ENCODE measurements at regions of chr16 and their contacts with region 1.

Region 1: DNA sequence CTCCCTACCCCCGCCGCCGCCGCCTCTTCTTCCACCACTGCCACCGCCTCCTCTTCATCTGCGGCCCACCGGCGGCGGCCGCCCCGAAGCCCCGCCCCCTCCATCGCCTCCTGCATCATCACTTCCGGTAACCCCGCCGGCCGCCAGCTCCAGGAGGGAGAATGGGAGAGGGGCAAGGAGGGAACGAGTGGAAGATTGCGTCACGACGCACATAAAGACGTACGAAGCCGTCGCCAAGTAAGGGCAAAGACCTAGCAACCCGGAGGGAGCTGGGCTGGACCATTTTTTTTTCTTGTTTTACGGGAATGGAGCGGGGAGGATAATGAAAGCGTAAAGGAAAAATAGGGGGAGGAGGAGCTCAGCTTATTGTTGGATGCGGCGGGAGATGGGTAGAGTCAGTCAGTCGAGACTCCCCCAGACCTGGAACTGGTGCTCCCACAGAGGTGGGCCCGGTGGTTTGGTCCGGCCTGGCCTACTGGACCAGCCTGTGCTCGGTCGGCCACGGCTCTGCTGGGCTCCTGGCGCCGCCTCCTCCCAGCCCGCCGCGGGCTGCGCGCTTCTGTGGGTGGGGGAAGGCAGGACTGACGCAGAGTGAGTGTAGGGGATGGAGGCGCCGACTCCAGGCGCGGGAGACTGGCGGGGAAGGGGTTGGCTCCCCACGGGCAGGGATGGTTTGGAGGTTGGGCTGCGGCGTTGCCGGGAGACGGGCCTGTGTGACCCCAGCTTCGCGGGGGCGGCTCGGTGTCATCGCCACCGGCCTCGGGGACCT is at the starts of genes DCUN1D3 and LYRM1:
- DNase-seq: peak; percentile 98
- H3K4me3 ChIP-seq: peak within 1 kb of the TSS; percentile 79 to 85 (median 85)
- H3K27ac ChIP-seq: peak within 1 kb of the TSS; percentile 99
- H3K4me1 ChIP-seq: peaks cover 62% of the 10 kb centered on the region
- H3K27me3 ChIP-seq: no peaks in the 10 kb centered on the region
- CTCF ChIP-seq: no peak
- total RNA-seq, gene DCUN1D3: 20.2 to 25.0 TPM
- total RNA-seq, gene LYRM1: 20.8 to 24.3 TPM

Region 2: DNA sequence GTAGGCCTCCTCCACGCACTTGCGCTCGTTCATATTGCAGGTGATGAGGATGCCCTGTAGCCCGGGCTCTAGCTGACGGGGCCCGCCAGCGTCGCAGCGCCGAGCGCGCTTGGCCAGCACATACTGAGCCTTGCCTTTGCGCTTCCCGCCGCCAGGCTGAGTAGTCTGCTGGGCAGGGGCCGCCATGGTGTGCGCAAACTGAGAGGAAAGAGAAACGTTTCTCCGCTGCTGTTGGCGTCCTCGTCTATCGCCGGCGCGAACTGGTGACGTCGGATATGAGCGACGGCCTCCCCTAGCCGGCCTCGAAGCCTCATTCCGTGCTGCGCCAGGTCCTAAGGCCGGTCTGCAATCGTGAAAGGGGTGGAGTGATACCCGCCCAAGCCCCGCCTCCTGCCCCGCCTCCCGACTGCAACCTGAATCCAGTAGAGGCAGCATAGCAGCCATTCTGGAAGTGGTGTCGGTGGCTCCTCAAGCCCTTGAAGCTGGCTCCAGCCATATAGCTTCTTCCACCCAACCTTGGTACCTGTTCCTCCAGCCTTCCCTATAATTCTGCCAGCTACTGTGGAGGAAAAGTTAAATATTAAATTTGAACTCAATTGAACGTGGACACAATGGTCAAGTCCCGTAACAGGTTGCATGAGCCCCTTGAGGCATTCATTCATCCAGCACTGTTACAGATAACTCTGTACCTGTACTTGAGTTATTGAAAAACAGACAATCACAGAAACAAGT is 158.8 kb before region 1 on chr16 and contains the start of gene THUMPD1:
- CTCF ChIA-PET with region 1: no interaction called
- dilution Hi-C with region 1: no loop called
- in situ Hi-C with region 1: no loop called
- intact Hi-C with region 1: loop called (anchors 10 kb)
- DNase-seq: peak; percentile 89
- H3K4me3 ChIP-seq: peak within 1 kb of the TSS; percentile 82 to 100 (median 92)
- H3K27ac ChIP-seq: peak within 1 kb of the TSS; percentile 78
- H3K4me1 ChIP-seq: peaks cover 10% of the 10 kb centered on the region
- H3K27me3 ChIP-seq: no peaks in the 10 kb centered on the region
- CTCF ChIP-seq: peak in 1 of 2 donors; percentile 39
- total RNA-seq, gene THUMPD1: 28.3 to 78.3 TPM

Region 3: DNA sequence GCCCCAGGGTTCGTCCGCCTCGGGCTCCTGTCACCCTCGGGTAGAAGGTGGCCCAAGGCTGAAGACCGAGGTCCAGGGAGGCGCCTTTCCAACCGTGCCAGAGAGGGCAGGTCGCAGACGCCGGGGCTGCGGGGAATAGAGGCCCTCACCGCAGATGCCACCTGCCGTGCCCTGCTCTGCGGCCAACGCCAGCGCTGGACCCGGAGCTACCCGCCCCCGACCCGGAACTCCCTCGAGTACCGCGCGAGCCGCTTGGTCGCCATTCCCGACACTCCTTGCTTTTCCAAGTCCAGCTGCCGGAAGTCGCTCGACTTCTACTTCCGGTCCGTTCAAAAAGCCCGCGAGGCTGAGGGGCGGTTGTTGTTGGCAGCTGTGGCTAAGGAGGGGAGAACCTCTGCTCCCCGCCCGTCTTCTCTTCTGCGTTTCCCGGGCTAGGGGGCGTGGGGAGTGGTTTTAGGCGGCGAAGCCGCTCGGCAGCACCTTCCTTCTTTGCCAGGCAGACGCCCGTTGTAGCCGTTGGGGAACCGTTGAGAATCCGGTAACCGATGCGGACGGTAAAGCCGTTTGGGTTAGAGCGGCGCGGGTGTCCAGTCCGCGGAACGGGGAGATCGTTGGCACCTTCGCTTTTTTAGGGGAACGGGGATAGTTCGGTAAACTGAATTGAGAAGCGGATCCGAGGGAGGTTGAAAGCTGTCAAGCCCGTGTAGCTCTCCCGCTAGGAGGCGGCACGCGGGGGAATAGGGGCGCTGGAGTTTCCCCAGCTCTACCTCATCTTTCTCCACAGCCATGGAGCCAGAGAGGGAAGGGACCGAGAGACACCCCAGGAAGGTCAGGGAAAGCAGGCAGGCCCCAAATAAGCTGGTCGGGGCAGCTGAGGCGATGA is 94.1 kb before region 1 on chr16 and contains the starts of genes ERI2 and REXO5:
- CTCF ChIA-PET with region 1: no interaction called
- dilution Hi-C with region 1: no loop called
- in situ Hi-C with region 1: no loop called
- intact Hi-C with region 1: no loop called
- DNase-seq: peak; percentile 94
- H3K4me3 ChIP-seq: peak within 1 kb of the TSS; percentile 72 to 98 (median 82)
- H3K27ac ChIP-seq: peak within 1 kb of the TSS; percentile 84
- H3K4me1 ChIP-seq: peaks cover 11% of the 10 kb centered on the region
- H3K27me3 ChIP-seq: no peaks in the 10 kb centered on the region
- CTCF ChIP-seq: peak in 1 of 2 donors; percentile 59
- total RNA-seq, gene ERI2: 31.4 to 32.5 TPM
- total RNA-seq, gene REXO5: 3.5 to 6.7 TPM

Region 4: DNA sequence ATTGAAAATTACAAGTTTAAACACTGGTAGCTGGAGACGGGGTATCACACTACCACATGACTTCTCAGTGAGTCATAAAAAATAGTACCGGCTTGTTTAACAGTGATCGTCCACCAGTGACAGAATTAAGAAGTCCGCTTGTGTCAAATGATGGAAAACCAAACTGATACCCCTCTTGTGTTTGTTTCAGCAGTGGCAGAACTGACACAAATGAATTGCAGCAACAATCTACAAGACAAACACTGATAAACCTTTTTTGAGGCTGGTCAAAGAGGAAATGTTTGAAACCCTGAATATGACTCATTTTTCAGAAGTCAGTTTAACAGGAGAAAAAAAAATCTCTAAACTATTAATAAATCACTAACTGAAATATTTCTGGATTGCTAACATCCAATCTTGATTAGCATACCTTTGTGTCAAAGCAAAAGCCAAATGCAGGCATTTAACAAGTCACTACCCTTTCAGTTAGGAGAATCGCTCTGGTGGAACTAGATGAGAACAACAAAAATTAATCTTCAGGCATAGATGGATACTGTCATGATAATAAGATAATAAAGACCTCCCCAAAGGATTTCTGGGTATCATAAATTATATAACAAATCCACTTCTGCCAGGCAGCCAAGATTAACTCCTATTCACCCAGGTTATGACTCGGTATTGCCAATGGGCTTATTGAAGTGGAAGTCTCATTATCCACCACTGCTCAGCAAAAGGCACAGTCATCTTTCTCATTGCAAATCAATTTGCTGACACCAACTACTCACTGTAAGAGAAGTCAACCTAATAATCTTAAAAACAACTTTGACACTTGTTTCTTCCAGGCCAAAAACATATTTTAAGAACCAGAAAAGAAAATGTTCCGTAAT is 21.1 kb before region 1 on chr16:
- CTCF ChIA-PET with region 1: no interaction called
- dilution Hi-C with region 1: no loop called
- in situ Hi-C with region 1: no loop called
- intact Hi-C with region 1: loop called (anchors 1 kb)
- DNase-seq: peak; percentile 61
- H3K4me3 ChIP-seq: no peak overlapping the region
- H3K27ac ChIP-seq: peak overlapping the region; percentile 61
- H3K4me1 ChIP-seq: peaks cover 30% of the 10 kb centered on the region
- H3K27me3 ChIP-seq: no peaks in the 10 kb centered on the region
- CTCF ChIP-seq: no peak

Region 5: GRCh38 chr16:20944861-20945574 is 44.5 kb after region 1 on chr16:
- CTCF ChIA-PET with region 1: no interaction called
- dilution Hi-C with region 1: no loop called
- in situ Hi-C with region 1: no loop called
- intact Hi-C with region 1: loop called (anchors 5 kb)
- DNase-seq: peak; percentile 19
- H3K4me3 ChIP-seq: no peak overlapping the region
- H3K27ac ChIP-seq: no peak overlapping the region
- H3K4me1 ChIP-seq: no peaks in the 10 kb centered on the region
- H3K27me3 ChIP-seq: no peaks in the 10 kb centered on the region
- CTCF ChIP-seq: peak in 1 of 2 donors; percentile 26

Region 6: DNA sequence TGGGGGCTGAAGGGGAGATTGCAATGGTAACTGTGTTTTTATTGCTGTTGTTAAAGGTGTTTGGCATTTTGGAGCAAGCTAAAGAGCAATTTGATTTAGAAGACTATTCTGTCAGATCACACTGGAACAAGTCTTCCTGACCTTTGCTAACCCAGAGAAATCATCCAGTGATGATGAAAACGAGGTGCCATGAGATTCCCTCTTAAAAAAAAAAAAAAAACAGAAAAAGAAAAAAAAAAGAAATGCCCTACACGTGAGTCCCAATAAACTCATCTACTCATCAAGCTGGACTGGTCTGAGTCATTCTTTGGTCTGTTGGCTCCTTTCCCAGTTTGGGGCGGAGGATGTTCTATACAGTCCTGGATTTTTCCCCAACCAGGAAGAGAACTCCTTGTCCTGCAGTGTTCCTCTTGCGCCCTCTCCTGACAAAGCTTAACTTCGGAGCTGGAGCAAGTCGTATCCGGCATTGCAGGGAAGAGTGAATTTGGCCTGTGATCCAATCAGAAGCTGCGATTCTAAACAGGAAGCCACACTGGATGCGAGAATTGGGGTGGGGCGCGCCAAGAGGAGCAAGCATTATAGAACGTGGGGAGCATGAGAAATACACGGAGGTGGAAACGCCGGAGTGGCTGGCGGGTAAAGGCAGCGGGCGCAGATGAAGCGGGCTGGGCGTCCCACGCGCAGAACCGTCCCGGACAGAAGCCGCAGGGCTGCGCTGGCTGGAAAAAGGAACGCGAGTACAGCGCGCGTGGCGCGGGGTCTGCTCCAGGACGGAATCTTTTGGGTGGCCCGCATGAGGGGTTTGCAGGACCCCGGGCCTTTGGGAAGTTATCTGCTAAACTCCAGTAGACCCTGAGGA is 400.1 kb after region 1 on chr16:
- CTCF ChIA-PET with region 1: interaction called, 3 read pairs
- dilution Hi-C with region 1: no loop called
- in situ Hi-C with region 1: no loop called
- intact Hi-C with region 1: loop called (anchors 10 kb)
- DNase-seq: peak; percentile 100
- H3K4me3 ChIP-seq: peak overlapping the region; percentile 57 to 82 (median 68)
- H3K27ac ChIP-seq: peak overlapping the region; percentile 98
- H3K4me1 ChIP-seq: peaks cover 13% of the 10 kb centered on the region
- H3K27me3 ChIP-seq: no peaks in the 10 kb centered on the region
- CTCF ChIP-seq: peak; percentile 85 to 93